ENCODE measurements at regions of chr4 and their contacts with region 1.

Region 1: DNA sequence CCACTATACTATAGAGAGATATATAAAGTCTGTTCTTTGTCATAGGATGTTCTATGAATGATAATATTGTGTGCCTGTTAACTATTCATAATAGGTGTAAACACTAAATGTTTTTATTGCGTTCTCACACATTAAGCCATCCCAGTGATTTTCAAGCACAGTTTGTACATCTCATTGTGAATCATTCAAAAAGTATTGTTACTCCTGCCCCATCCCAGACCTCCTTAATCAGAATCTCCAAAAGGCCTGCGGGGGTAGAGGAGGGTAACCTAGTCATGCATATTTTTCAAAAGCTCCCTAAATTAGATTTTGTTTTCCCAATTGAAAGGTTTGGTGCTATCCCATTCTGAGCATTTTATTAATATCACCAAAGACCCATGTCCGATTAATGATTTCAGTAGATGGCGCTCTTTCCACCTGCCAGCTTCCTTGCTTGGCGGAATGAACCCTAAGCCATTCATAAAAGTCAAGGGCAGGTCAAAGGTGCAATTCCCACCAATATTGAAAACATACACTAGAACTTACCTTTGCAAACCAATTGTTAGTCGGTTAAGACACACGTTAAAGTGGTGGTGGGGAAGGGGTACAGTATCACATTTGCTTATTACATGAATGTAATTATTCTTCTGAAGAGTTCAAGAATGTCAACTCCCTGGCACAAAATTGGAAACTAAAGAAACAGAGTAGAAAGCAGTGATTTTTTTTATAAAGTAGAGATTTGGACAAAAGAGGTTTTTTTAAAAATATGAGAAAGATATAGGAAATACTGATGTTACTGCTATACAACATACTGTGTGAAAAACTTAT is 5.8 kb upstream of the TET2 start:
- DNase-seq: peak in 1 of 2 donors; percentile 37
- ATAC-seq: peak in 6 of 8 donors; percentile 38 to 73 (median 67)
- H3K4me3 ChIP-seq: no peak overlapping the region
- H3K27ac ChIP-seq: no peak overlapping the region
- H3K4me1 ChIP-seq: peaks cover 0 to 27% (median 0%) of the 10 kb centered on the region in 9 donors
- H3K27me3 ChIP-seq: no peaks in the 10 kb centered on the region
- CTCF ChIP-seq: peak; percentile 47 to 86 (median 73)

Region 2: GRCh38 chr4:105257826-105258495 is 117.1 kb after region 1 on chr4:
- intact Hi-C with region 1: loop called in 2 of 10 experiments (anchors 2 to 10 kb)
- DNase-seq: no peak
- ATAC-seq: no peak
- H3K4me3 ChIP-seq: no peak overlapping the region
- H3K27ac ChIP-seq: no peak overlapping the region
- H3K4me1 ChIP-seq: no peaks in the 10 kb centered on the region
- H3K27me3 ChIP-seq: no peaks in the 10 kb centered on the region
- CTCF ChIP-seq: no peak

Region 3: GRCh38 chr4:105471566-105472176 is 330.8 kb after region 1 on chr4:
- intact Hi-C with region 1: loop called in 9 of 10 experiments (anchors 1 to 5 kb)
- DNase-seq: peak in 1 of 2 donors; percentile 76
- ATAC-seq: peak in 5 of 8 donors; percentile 43 to 66 (median 49)
- H3K4me3 ChIP-seq: peak overlapping the region in 8 of 10 donors; percentile 79 to 97 (median 91)
- H3K27ac ChIP-seq: peak overlapping the region in 9 of 10 donors; percentile 97 to 100 (median 98)
- H3K4me1 ChIP-seq: peaks cover 5 to 67% (median 47%) of the 10 kb centered on the region in 9 donors
- H3K27me3 ChIP-seq: no peaks in the 10 kb centered on the region
- CTCF ChIP-seq: peak; percentile 39 to 84 (median 76)

Region 4: GRCh38 chr4:105715692-105716278 is 574.9 kb after region 1 on chr4:
- intact Hi-C with region 1: loop called in 2 of 10 experiments (anchors 5 to 10 kb)
- DNase-seq: no peak
- ATAC-seq: peak in 1 of 8 donors; percentile 45
- H3K4me3 ChIP-seq: peak overlapping the region in 2 of 10 donors; percentile 3 to 17
- H3K27ac ChIP-seq: no peak overlapping the region
- H3K4me1 ChIP-seq: peaks cover 0 to 20% (median 0%) of the 10 kb centered on the region in 9 donors
- H3K27me3 ChIP-seq: no peaks in the 10 kb centered on the region
- CTCF ChIP-seq: peak; percentile 31 to 77 (median 62)